Heart right ventricle (tissue), 16 donors: ENCODE measurements at regions of chr10 and their contacts with region 1.

Region 1: DNA sequence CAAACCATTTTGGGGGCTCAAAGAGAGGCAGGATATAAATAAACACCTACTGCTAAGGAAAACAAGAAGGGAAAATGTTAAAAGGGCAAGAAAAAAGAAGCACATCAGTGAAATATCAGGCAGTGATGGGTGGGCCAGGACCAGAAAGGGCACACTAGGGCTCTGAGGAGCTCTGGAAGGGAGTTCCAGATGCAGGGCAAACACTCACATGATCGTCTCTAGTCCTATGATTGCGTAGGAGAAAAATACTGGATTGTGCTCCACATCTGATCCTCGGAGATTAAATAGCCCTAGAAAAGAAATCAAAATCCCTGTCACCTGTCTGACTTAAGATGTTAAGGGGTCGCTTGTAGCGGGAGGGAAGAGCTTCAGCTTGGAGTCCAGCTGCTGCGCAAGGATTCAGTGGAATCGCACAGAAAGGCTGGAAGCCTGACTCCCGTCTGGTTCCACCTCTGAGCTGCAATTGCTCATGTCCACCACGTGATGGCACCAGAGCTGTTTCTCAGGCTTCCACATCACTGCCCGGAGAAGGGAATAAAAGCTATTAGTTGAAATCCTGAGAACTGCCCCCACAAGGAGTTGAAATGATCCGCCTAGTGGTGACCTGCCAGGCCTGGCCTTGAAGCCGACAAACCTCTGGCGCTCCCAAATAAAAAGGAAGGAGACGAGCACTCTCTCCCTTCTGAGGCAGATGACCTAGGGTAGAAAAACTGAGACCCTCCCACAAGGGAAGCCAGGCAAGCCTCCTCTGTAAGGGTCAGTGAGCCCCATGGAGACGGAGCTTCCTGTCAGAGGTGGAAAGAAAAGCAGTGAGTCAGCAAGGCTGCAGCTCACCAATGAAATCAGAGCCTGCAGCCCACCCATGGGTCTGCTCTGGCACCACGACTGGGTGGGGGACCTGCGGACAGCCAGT is 39.2 kb downstream of the XPNPEP1 start:
- DNase-seq: peak; percentile 48 to 75
- ATAC-seq: peak; percentile 79 to 93 (median 87)
- H3K4me3 ChIP-seq: peak overlapping the region in 6 of 10 donors; percentile 3 to 30 (median 24)
- H3K27ac ChIP-seq: peak overlapping the region; percentile 12 to 78 (median 68)
- H3K4me1 ChIP-seq: peaks cover 3 to 49% (median 23%) of the 10 kb centered on the region in 9 donors
- H3K27me3 ChIP-seq: no peaks in the 10 kb centered on the region
- CTCF ChIP-seq: peak; percentile 92 to 98 (median 96)

Region 2: DNA sequence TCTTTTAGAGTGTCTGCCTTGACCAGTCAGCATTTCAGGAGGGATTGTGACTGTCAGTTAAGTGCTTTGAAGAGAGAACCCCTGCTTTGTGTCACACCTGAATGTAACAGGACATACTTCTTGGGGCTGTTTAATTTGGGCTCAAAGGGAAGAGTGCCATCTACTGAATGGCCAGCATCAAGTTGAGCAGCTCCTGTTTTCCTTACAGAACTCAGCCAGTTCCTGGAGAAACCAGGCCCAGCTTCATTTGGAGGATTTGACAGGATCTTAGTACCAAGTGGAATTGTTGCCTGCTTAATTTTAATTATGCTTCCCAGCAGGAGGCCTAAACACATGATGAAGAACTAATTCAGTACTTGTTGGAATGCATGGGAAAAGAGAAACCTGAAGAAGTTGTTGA is 131.9 kb after region 1 on chr10:
- intact Hi-C with region 1: loop called in 2 of 10 experiments (anchors 10 kb)
- DNase-seq: no peak
- ATAC-seq: peak in 7 of 8 donors; percentile 46 to 63 (median 58)
- H3K4me3 ChIP-seq: no peak overlapping the region
- H3K27ac ChIP-seq: peak overlapping the region in 6 of 10 donors; percentile 8 to 66 (median 47)
- H3K4me1 ChIP-seq: peaks cover 2 to 89% (median 77%) of the 10 kb centered on the region in 9 donors
- H3K27me3 ChIP-seq: no peaks in the 10 kb centered on the region
- CTCF ChIP-seq: peak in 6 of 9 donors; percentile 23 to 56 (median 37)

Region 3: DNA sequence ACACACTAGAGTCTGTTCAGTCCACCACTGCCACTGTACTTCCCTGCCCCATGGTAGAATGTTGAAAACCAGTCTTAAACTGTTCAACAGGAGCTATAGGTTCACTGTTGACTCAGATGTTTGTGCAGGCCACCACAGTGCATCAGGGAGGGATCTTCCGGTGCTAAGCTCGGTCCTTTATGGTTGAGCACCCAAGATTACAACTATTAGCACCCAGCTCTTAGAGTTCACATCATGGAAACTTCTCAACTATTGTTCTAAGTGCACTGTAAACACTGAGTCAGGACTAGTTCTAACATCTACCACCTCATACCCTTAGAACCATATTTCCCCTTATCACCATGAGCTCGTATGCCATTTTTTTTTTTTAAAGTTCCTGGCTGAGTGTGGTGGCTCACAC is 226.2 kb after region 1 on chr10:
- intact Hi-C with region 1: loop called in 2 of 10 experiments (anchors 5 to 10 kb)
- DNase-seq: no peak
- ATAC-seq: peak in 1 of 8 donors; percentile 34
- H3K4me3 ChIP-seq: no peak overlapping the region
- H3K27ac ChIP-seq: no peak overlapping the region
- H3K4me1 ChIP-seq: peaks cover 0 to 18% (median 5%) of the 10 kb centered on the region in 9 donors
- H3K27me3 ChIP-seq: no peaks in the 10 kb centered on the region
- CTCF ChIP-seq: no peak

Region 4: GRCh38 chr10:110129490-110129889 is 245.4 kb after region 1 on chr10:
- intact Hi-C with region 1: loop called in 4 of 10 experiments (anchors 5 to 10 kb)
- DNase-seq: no peak
- ATAC-seq: no peak
- H3K4me3 ChIP-seq: no peak overlapping the region
- H3K27ac ChIP-seq: no peak overlapping the region
- H3K4me1 ChIP-seq: peaks cover 0 to 3% (median 0%) of the 10 kb centered on the region in 9 donors
- H3K27me3 ChIP-seq: no peaks in the 10 kb centered on the region
- CTCF ChIP-seq: no peak

Region 5: DNA sequence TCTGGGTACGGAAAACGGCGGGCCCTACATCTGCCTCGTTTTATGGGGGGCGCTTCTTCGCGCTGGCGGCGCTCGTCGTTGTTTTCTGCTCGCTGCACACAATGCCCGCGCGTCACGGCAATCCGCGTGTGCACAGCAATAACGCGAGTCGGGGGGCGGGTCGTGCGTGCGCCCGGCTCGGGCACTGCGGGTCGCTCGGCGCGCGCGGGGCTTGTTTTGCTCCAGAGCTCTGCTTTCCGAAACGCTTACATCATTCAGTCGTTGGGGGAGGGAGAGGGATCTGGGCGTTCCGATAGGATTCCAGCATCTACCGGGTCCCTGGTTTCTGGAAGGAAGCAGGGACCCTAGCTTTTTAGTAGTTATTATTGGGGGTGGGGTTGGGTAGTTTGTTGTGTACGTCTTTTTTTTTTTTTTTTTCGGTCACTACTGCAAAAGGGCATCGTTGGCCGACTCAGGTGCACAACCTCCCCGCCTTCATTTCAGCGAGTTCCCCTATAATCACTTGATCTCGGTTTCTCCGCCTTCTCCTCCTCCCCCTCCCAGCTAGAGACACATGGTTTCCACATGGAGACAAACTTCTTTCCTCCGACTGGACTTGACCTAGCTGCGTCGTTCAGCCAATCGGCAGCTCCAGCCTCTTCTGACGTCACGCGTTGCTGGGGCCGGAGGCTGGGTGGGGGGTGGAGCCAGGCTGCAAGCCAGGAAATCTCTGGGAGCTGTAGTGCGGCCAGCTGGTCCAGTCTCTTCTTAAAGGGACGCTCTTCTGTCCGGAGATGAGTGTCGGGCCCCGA is 326.8 kb after region 1 on chr10:
- intact Hi-C with region 1: loop called in 2 of 10 experiments (anchors 10 kb)
- DNase-seq: peak; percentile 97
- ATAC-seq: peak; percentile 89 to 94 (median 91)
- H3K4me3 ChIP-seq: peak overlapping the region; percentile 61 to 92 (median 82)
- H3K27ac ChIP-seq: peak overlapping the region; percentile 94 to 100 (median 98)
- H3K4me1 ChIP-seq: peaks cover 12 to 57% (median 52%) of the 10 kb centered on the region in 9 donors
- H3K27me3 ChIP-seq: no peaks in the 10 kb centered on the region
- CTCF ChIP-seq: no peak

Region 6: GRCh38 chr10:110279407-110279986 is 395.4 kb after region 1 on chr10:
- intact Hi-C with region 1: loop called in 5 of 10 experiments (anchors 5 to 10 kb)
- DNase-seq: peak in 1 of 2 donors; percentile 71
- ATAC-seq: peak; percentile 46 to 84 (median 76)
- H3K4me3 ChIP-seq: peak overlapping the region in 1 of 10 donors; percentile 26
- H3K27ac ChIP-seq: peak overlapping the region in 6 of 10 donors; percentile 5 to 57 (median 41)
- H3K4me1 ChIP-seq: peaks cover 2 to 55% (median 30%) of the 10 kb centered on the region in 9 donors
- H3K27me3 ChIP-seq: no peaks in the 10 kb centered on the region
- CTCF ChIP-seq: peak; percentile 69 to 89 (median 78)